Activated B cell treated with CpG ODN at 0.5 μM for 24 hours (primary cell): ENCODE measurements at regions of chr11 and their contacts with region 1.

Region 1: DNA sequence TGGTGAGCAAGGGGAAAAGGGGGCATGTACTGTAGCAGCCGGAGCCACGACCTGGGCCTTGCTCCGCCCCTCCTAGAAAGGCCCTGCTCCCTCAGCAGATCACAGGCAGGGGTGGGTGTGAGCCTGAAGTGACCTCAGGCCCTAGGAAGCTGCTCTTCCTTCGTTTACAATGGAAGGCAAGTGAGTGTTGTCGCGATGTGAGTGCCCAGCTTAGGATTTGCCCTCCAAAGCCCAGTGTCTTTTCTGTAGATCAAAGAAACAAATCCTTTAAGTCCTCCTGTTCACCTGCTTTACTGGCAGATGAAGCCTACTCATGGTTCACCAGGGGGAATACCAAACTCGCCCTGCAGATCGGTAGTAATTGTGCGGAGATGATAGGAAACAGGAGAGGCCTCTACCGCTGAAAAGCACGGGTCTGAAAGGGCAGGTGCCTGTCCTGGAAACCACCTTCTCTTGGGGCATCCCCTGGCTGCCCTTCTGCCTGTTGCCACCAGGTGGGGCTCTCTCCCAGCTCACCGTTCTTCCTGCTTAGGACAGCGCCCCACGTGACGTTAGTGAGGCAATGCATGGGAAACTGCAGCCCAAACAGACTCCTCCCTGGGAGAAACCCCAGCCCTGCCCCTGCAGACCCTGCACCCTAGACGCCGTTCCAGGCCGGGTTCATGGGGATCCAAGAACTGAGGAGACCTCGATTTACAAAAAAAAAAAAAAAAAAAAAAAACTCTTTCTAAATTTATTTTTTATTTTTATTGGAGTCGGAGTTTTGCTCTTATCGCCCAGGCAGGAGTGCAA is 45.9 kb upstream of the RAB1B start:
- DNase-seq: peak; percentile 85
- ATAC-seq: peak; percentile 96
- H3K4me3 Mint-ChIP-seq: peak overlapping the region; percentile 64
- H3K27ac Mint-ChIP-seq: peak overlapping the region; percentile 99
- H3K4me1 Mint-ChIP-seq: peaks cover 20% of the 10 kb centered on the region
- H3K27me3 Mint-ChIP-seq: no peaks in the 10 kb centered on the region
- CTCF ChIP-seq: peak; percentile 93

Region 2: DNA sequence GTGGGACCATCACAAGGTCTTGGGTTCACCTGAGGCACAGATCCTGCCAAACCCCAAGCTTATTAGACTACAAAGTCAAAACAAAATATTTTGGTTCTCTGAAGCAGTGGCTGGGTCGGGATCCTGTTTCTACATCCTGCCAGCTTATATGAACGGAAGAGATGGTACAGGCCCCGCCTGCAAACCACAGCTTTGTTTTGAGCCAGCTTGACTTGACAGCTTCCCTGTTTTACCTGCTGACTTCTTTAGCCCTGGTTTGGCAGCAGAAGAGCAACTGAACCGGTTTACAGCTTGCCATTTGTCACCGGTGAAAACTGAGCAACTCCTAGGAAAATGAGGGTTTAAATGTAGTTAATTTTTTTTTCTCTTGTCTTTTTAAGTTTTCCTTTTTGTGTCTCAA is 141.0 kb before region 1 on chr11:
- CTCF ChIA-PET with region 1: no interaction called
- POLR2A ChIA-PET with region 1: no interaction called
- intact Hi-C with region 1: loop called (anchors 2 kb)
- DNase-seq: peak; percentile 50
- ATAC-seq: peak; percentile 90
- H3K4me3 Mint-ChIP-seq: peak overlapping the region; percentile 80
- H3K27ac Mint-ChIP-seq: peak overlapping the region; percentile 98
- H3K4me1 Mint-ChIP-seq: peaks cover 94% of the 10 kb centered on the region
- H3K27me3 Mint-ChIP-seq: no peaks in the 10 kb centered on the region
- CTCF ChIP-seq: no peak

Region 3: GRCh38 chr11:66136752-66137123 is 85.8 kb before region 1 on chr11:
- CTCF ChIA-PET with region 1: no interaction called
- POLR2A ChIA-PET with region 1: no interaction called
- intact Hi-C with region 1: loop called (anchors 1 kb)
- DNase-seq: no peak
- ATAC-seq: no peak
- H3K4me3 Mint-ChIP-seq: no peak overlapping the region
- H3K27ac Mint-ChIP-seq: peak overlapping the region; percentile 47
- H3K4me1 Mint-ChIP-seq: peaks cover 84% of the 10 kb centered on the region
- H3K27me3 Mint-ChIP-seq: no peaks in the 10 kb centered on the region
- CTCF ChIP-seq: no peak

Region 4: GRCh38 chr11:66258473-66258893 is 35.9 kb after region 1 on chr11:
- CTCF ChIA-PET with region 1: interaction called, 4 read pairs
- POLR2A ChIA-PET with region 1: interaction called, 4 read pairs
- intact Hi-C with region 1: loop called (anchors 1 kb)
- DNase-seq: no peak
- ATAC-seq: no peak
- H3K4me3 Mint-ChIP-seq: peak overlapping the region; percentile 96
- H3K27ac Mint-ChIP-seq: peak overlapping the region; percentile 96
- H3K4me1 Mint-ChIP-seq: peaks cover 23% of the 10 kb centered on the region
- H3K27me3 Mint-ChIP-seq: no peaks in the 10 kb centered on the region
- CTCF ChIP-seq: no peak

Region 5: DNA sequence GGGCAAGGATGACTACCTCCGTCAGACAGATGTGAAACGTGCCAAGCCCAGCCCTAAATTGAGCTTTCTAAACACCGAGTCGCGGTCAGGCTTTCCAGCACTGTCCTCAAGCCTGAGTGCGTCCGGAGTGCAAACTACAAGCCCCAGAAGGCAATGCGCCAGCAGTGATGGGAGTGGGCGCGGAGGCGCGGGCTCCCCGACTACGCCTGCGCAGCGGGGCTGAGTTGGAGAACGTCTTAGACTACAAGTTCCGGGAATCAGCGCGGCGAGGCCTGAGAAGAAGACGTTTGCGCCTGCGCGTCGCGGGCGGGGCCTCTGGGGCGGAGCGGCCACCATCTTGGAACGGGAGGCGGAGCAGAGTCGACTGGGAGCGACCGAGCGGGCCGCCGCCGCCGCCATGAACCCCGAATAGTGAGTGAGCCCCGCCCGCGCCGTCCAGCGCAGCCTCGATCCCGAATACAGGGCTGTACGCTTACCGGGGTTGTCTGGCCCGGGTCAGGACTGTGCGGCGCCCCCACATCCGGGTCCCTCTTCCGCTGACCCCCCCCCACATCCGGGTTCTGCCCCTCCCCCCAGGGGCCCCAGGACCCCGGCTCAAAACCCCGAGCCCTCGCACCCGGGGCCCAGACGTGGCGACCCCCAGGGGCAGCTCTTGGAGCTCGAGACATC is 45.9 kb after region 1 on chr11 and contains the start of gene RAB1B:
- CTCF ChIA-PET with region 1: no interaction called
- POLR2A ChIA-PET with region 1: interaction called, 10 read pairs
- intact Hi-C with region 1: loop called (anchors 1 kb)
- DNase-seq: peak; percentile 98
- ATAC-seq: peak; percentile 76
- H3K4me3 Mint-ChIP-seq: peak within 1 kb of the TSS; percentile 90
- H3K27ac Mint-ChIP-seq: peak within 1 kb of the TSS; percentile 97
- H3K4me1 Mint-ChIP-seq: peaks cover 32% of the 10 kb centered on the region
- H3K27me3 Mint-ChIP-seq: no peaks in the 10 kb centered on the region
- CTCF ChIP-seq: no peak
- total RNA-seq, gene RAB1B: 115 and 118 TPM in 2 replicates

Region 6: DNA sequence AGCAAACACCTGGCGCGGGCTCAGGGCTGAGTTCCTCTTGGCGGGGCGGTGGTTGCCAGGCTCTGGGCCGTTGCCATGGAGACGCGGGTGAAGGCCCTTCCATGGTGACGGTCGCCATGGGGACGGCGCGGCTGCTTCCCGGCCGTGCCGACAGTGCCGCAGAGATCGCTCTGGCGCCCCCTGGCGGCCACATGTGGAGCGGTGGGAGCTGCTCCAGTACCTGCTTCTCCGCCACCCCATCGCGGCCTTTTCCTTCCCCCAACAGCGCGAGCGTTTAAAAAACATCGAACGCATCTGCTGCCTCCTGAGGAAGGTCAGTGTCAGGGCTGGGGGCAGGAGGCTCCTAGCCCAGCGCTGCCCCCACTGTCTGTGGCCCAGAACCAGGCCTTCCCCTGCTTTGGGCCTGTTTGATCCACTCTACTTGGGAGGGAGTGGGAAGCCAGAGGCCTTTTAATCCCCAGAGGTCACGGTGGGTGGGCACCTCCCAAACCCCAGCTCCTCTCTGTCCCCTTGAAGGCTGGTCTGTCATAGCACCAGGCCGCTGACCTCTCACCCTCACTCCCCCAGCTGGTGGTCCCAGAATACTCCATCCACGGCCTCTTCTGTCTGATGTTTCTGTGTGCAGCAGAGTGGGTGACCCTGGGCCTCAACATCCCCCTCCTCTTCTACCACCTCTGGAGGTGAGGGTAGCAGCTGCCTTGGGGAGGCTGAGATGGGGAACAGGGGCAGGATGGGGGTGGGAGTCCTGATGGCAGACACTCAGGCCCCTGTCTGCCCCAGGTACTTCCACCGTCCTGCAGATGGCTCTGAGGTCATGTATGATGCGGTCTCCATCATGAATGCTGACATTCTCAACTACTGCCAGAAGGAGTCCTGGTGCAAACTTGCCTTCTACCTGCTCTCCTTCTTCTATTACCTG is 60.2 kb after region 1 on chr11:
- CTCF ChIA-PET with region 1: interaction called, 23 read pairs
- POLR2A ChIA-PET with region 1: interaction called, 4 read pairs
- intact Hi-C with region 1: loop called (anchors 1 kb)
- DNase-seq: peak; percentile 100
- ATAC-seq: peak; percentile 79
- H3K4me3 Mint-ChIP-seq: peak overlapping the region; percentile 32
- H3K27ac Mint-ChIP-seq: peak overlapping the region; percentile 77
- H3K4me1 Mint-ChIP-seq: peaks cover 36% of the 10 kb centered on the region
- H3K27me3 Mint-ChIP-seq: no peaks in the 10 kb centered on the region
- CTCF ChIP-seq: peak; percentile 70

Region 7: GRCh38 chr11:66328307-66329144 is 106.0 kb after region 1 on chr11:
- CTCF ChIA-PET with region 1: no interaction called
- POLR2A ChIA-PET with region 1: no interaction called
- intact Hi-C with region 1: loop called (anchors 1 kb)
- DNase-seq: peak; percentile 79
- ATAC-seq: peak; percentile 99
- H3K4me3 Mint-ChIP-seq: peak overlapping the region; percentile 46
- H3K27ac Mint-ChIP-seq: no peak overlapping the region
- H3K4me1 Mint-ChIP-seq: peaks cover 22% of the 10 kb centered on the region
- H3K27me3 Mint-ChIP-seq: no peaks in the 10 kb centered on the region
- CTCF ChIP-seq: peak; percentile 63

Region 8: GRCh38 chr11:66616379-66617154 is 394.0 kb after region 1 on chr11 and contains the start of gene RBM14:
- CTCF ChIA-PET with region 1: no interaction called
- POLR2A ChIA-PET with region 1: no interaction called
- intact Hi-C with region 1: no loop called
- DNase-seq: peak; percentile 97
- ATAC-seq: peak; percentile 88
- H3K4me3 Mint-ChIP-seq: peak within 1 kb of the TSS; percentile 98
- H3K27ac Mint-ChIP-seq: peak within 1 kb of the TSS; percentile 99
- H3K4me1 Mint-ChIP-seq: peaks cover 63% of the 10 kb centered on the region
- H3K27me3 Mint-ChIP-seq: no peaks in the 10 kb centered on the region
- CTCF ChIP-seq: no peak
- total RNA-seq, gene RBM14: 147 and 160 TPM in 2 replicates